ENCODE measurements at regions of chr16 and their contacts with region 1.

Region 1: DNA sequence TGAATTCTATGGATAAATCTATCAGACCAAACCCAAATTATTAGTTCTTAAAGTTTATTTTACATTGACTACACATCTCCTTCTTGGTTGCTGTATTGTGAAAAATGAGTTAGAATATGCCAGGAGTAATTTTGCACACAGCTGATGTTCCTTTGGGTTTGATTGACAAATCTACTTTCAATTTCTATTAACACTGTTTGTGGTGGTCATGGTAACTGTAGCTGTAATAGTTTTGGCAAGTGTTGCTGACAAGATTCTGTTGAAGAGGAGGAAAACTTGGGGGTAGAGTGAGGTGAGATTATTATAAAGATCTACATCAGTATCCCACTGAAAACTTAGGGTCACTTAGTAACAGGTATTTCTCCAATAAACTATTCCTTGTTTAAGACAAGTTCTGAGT is 30.3 kb downstream of the MRTFB start:
- DNase-seq: no peak
- ATAC-seq: no peak
- H3K4me3 ChIP-seq: no peak overlapping the region
- H3K27ac ChIP-seq: no peak overlapping the region
- H3K4me1 ChIP-seq: peaks cover 2 to 68% (median 46%) of the 10 kb centered on the region in 12 donors
- H3K27me3 ChIP-seq: no peaks in the 10 kb centered on the region
- CTCF ChIP-seq: no peak
- POLR2A ChIP-seq: no peak

Region 2: DNA sequence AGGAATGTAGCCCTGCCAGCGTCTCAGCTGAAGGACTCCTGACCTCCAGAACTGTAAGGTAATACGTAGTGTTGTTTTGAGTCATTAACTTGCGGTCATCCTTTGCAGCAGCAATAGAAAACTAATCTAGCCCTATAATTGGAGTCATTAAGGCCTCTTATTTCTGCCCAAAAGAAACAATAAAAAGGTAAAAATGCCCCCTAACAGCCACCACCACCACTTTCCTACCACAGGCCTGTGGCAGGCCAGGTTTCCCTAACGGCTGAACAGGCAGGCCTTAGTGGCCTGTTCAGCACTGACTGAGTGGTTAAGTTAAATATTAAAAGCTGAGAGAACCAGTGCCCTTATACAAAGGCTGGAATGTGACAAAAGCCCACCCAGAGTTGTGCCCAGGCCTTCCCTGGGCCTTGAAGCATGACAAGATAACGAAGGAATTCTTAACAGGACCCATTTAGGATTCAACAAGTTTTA is 468.0 kb before region 1 on chr16:
- intact Hi-C with region 1: no loop called
- DNase-seq: no peak
- ATAC-seq: no peak
- H3K4me3 ChIP-seq: no peak overlapping the region
- H3K27ac ChIP-seq: no peak overlapping the region
- H3K4me1 ChIP-seq: no peaks in the 10 kb centered on the region
- H3K27me3 ChIP-seq: peaks cover 0 to 4% (median 0%) of the 10 kb centered on the region in 9 donors
- CTCF ChIP-seq: no peak
- POLR2A ChIP-seq: no peak

Region 3: GRCh38 chr16:13968835-13969234 is 132.6 kb before region 1 on chr16:
- intact Hi-C with region 1: no loop called
- DNase-seq: no peak
- ATAC-seq: no peak
- H3K4me3 ChIP-seq: no peak overlapping the region
- H3K27ac ChIP-seq: no peak overlapping the region
- H3K4me1 ChIP-seq: no peaks in the 10 kb centered on the region
- H3K27me3 ChIP-seq: peaks cover 0 to 5% (median 0%) of the 10 kb centered on the region in 9 donors
- CTCF ChIP-seq: no peak
- POLR2A ChIP-seq: no peak

Region 4: DNA sequence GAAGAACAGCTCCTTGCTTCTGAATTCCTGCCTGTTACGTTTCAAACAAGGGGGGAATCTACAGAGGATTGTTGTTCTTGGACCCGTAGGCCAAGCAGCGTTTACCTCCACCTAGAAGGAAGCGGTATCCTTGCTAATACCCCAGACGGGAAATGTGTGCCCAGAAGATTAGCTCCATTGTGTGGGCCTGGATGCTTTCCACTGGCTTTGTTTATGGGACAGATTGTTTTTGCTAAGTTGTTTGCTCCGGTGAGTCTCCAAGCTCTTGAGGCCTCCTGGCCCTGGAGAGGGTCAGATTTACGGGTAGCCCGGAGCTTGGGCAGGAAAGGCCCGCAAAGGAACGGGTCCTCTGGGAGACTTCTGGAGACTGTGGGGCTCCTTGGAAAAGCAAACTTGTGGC is 58.7 kb before region 1 on chr16:
- intact Hi-C with region 1: no loop called
- DNase-seq: peak in 3 of 5 donors; percentile 29 to 53 (median 40)
- ATAC-seq: peak; percentile 38 to 90 (median 85)
- H3K4me3 ChIP-seq: no peak overlapping the region
- H3K27ac ChIP-seq: peak overlapping the region in 10 of 12 donors; percentile 12 to 76 (median 48)
- H3K4me1 ChIP-seq: peaks cover 0 to 23% (median 0%) of the 10 kb centered on the region in 12 donors
- H3K27me3 ChIP-seq: no peaks in the 10 kb centered on the region
- CTCF ChIP-seq: no peak
- POLR2A ChIP-seq: no peak

Region 5: DNA sequence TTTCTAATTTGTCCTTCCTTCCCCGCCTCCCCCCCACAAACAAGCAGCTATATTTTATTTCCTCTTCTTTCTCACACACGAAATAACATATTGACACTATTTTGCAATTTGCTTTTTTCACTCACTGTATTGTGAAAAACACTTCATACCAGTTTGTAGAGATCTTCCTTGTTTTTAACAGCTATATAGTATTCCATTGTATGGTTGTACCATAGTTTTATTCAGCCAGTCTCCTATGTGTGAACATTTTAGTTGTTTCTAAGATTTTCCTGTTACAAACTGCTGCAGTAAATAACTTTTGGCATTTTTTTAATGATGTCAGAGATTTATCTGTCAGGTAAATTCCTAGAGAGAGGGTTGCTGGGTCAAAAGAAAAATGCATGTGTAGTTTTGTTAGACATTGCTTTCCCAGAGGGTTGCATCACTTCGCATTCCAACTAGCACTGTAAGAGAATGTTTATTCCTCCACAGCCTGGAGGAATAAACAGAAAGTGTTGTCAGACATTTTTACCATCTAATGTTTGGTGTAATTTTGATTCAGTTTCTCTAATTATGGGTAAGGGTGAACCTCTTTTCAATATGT is 70.9 kb after region 1 on chr16:
- intact Hi-C with region 1: loop called in 1 of 10 experiments (anchors 10 kb)
- DNase-seq: no peak
- ATAC-seq: no peak
- H3K4me3 ChIP-seq: no peak overlapping the region
- H3K27ac ChIP-seq: no peak overlapping the region
- H3K4me1 ChIP-seq: no peaks in the 10 kb centered on the region
- H3K27me3 ChIP-seq: no peaks in the 10 kb centered on the region
- CTCF ChIP-seq: no peak
- POLR2A ChIP-seq: no peak

Region 6: GRCh38 chr16:14399378-14400284 is 298.2 kb after region 1 on chr16:
- intact Hi-C with region 1: no loop called
- DNase-seq: peak in 4 of 5 donors; percentile 31 to 65 (median 48)
- ATAC-seq: peak; percentile 92 to 95 (median 94)
- H3K4me3 ChIP-seq: no peak overlapping the region
- H3K27ac ChIP-seq: peak overlapping the region; percentile 55 to 83 (median 72)
- H3K4me1 ChIP-seq: peaks cover 0 to 18% (median 11%) of the 10 kb centered on the region in 12 donors
- H3K27me3 ChIP-seq: no peaks in the 10 kb centered on the region
- CTCF ChIP-seq: no peak
- POLR2A ChIP-seq: no peak

Measured in heart left ventricle (tissue), 16 donors.